Naive thymus-derived CD4-positive, alpha-beta T cell (primary cell): ENCODE measurements at regions of chr15 and their contacts with region 1.

Region 1: DNA sequence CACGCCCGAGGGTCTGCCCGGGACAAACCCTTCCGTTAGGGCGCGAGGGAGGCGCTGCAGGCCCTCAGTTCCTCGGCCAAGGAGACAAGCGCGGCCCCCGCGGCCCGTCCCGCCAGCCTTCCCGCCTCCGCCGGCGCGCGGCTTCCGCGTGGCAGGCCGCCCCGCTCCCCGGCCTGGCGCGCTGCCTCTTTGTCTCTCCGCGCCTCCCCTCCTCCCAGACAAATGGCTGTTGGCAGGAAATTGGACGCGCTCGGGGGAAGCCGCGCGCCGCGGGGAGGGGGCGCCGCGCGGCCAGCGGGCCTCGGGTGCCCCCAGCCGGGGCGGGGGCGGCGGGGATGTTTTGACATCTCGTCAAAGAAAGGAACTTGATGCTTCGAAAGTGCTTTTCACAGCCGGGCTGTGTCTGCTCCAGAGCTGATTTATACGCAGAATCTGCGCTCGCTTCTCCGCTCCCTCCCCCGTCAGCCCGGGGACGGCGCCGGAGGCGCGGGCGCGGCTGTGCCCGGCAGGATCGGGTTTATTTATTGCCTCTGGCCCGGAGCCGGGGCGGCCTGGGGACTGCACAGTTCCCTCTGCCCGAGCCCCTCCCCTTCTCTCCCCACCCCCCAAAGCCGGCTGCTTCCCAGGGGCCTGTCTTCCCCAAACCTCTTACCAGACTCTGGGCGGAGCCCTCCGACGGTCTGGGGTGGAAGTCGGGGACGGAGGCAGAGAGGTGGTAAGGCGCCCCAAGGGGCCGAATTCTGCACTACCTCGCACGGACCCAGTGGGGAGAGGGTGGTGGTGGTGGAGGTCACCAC is 20.7 kb downstream of the SHF start:
- DNase-seq: peak; percentile 58 to 82 (median 78)
- ATAC-seq: peak; percentile 95
- H3K4me3 ChIP-seq: peak overlapping the region; percentile 70
- H3K4me3 Mint-ChIP-seq: peak overlapping the region; percentile 62 to 86 (median 74)
- H3K27ac ChIP-seq: peak overlapping the region; percentile 95
- H3K27ac Mint-ChIP-seq: peak overlapping the region; percentile 62 to 92 (median 83)
- H3K4me1 ChIP-seq: peaks cover 10 to 13% of the 10 kb centered on the region in 2 donors
- H3K4me1 Mint-ChIP-seq: peaks cover 0 to 31% (median 18%) of the 10 kb centered on the region in 7 donors
- H3K27me3 ChIP-seq: no peaks in the 10 kb centered on the region
- H3K27me3 Mint-ChIP-seq: no peaks in the 10 kb centered on the region

Region 2: GRCh38 chr15:45126535-45127158 is 40.4 kb before region 1 on chr15:
- CTCF ChIA-PET with region 1: no interaction called
- POLR2A ChIA-PET with region 1: no interaction called
- intact Hi-C with region 1: loop called in 1 of 2 experiments (anchors 1 kb)
- DNase-seq: peak in 7 of 9 donors; percentile 17 to 51 (median 43)
- ATAC-seq: peak; percentile 72
- H3K4me3 ChIP-seq: no peak overlapping the region
- H3K4me3 Mint-ChIP-seq: no peak overlapping the region
- H3K27ac ChIP-seq: no peak overlapping the region
- H3K27ac Mint-ChIP-seq: no peak overlapping the region
- H3K4me1 ChIP-seq: no peaks in the 10 kb centered on the region
- H3K4me1 Mint-ChIP-seq: peaks cover 0 to 13% (median 6%) of the 10 kb centered on the region in 7 donors
- H3K27me3 ChIP-seq: peaks cover 0 to 8% of the 10 kb centered on the region in 2 donors
- H3K27me3 Mint-ChIP-seq: peaks cover 59 to 70% (median 61%) of the 10 kb centered on the region in 5 donors

Region 3: DNA sequence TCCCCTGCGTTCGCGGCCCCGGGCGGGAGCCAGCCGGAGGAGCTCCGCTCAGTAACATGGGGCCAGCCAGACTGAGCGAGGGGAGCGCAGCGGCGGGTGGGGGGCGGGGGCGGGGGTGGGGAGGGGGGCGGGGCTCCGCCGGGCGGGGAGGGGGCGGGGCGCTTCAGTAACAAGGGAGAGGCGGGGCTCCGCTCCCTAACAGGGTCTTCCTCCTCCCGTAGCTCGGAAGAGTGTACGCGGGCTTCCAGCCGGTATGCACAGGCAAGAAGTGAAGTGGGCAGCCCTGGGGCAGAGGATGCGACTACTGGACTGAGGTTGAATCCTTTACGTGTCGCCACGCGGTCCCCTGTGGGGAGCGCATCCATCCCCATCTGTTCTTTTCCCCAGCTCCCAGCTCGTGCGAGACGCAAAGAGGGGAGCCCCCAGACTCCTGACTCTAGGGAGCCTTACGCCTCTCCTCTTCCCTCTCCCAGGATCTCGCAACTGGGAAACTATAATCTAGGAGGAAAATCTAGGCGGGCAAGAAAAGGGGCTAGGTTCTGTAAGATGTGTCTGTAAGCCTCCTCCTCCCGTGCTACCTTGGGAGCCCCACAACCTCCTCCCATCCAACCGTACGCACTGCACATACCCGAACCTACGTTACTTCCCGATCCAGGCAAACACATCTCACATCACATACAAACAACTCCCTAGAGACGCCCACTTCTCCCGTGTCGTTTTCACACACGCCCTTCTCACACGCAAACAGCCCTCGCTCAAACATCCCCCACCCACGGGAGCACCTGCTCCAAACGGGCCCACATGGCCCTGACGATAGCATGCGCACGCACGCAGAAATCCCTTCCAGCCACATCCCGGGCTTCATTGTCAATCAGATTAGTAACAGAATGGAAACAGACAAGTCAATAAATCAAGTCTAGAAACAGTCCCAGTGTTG is 21.1 kb after region 1 on chr15 and contains the start of gene SHF:
- CTCF ChIA-PET with region 1: interaction called, 3 read pairs
- POLR2A ChIA-PET with region 1: interaction called, 16 read pairs
- intact Hi-C with region 1: loop called in 1 of 2 experiments (anchors 1 kb)
- DNase-seq: peak; percentile 38 to 83 (median 57)
- ATAC-seq: peak; percentile 81
- H3K4me3 ChIP-seq: peak within 1 kb of the TSS; percentile 76
- H3K4me3 Mint-ChIP-seq: peak within 1 kb of the TSS; percentile 84 to 97 (median 92)
- H3K27ac ChIP-seq: peak within 1 kb of the TSS; percentile 92
- H3K27ac Mint-ChIP-seq: peak within 1 kb of the TSS; percentile 77 to 95 (median 89)
- H3K4me1 ChIP-seq: peaks cover 3 to 5% of the 10 kb centered on the region in 2 donors
- H3K4me1 Mint-ChIP-seq: peaks cover 11 to 27% (median 20%) of the 10 kb centered on the region in 7 donors
- H3K27me3 ChIP-seq: no peaks in the 10 kb centered on the region
- H3K27me3 Mint-ChIP-seq: peaks cover 0 to 25% (median 2%) of the 10 kb centered on the region in 5 donors
- total RNA-seq, gene SHF: 3.5 to 8.7 (median 6.2) TPM

Region 4: GRCh38 chr15:45268135-45268534 is 101.1 kb after region 1 on chr15:
- CTCF ChIA-PET with region 1: interaction called, 3 read pairs
- POLR2A ChIA-PET with region 1: no interaction called
- intact Hi-C with region 1: loop called in 1 of 2 experiments (anchors 2 kb)
- DNase-seq: no peak
- ATAC-seq: no peak
- H3K4me3 ChIP-seq: no peak overlapping the region
- H3K4me3 Mint-ChIP-seq: no peak overlapping the region
- H3K27ac ChIP-seq: no peak overlapping the region
- H3K27ac Mint-ChIP-seq: no peak overlapping the region
- H3K4me1 ChIP-seq: no peaks in the 10 kb centered on the region
- H3K4me1 Mint-ChIP-seq: no peaks in the 10 kb centered on the region
- H3K27me3 ChIP-seq: no peaks in the 10 kb centered on the region
- H3K27me3 Mint-ChIP-seq: no peaks in the 10 kb centered on the region

Region 5: GRCh38 chr15:45587095-45587860 is 420.2 kb after region 1 on chr15 and contains the start of gene BLOC1S6:
- CTCF ChIA-PET with region 1: no interaction called
- POLR2A ChIA-PET with region 1: interaction called, 3 read pairs
- intact Hi-C with region 1: loop called (anchors 1 kb)
- DNase-seq: peak; percentile 81 to 91 (median 87)
- ATAC-seq: peak; percentile 87
- H3K4me3 ChIP-seq: peak within 1 kb of the TSS; percentile 87
- H3K4me3 Mint-ChIP-seq: peak within 1 kb of the TSS; percentile 96 to 100 (median 98)
- H3K27ac ChIP-seq: peak within 1 kb of the TSS; percentile 97
- H3K27ac Mint-ChIP-seq: peak within 1 kb of the TSS; percentile 100
- H3K4me1 ChIP-seq: peaks cover 25 to 26% of the 10 kb centered on the region in 2 donors
- H3K4me1 Mint-ChIP-seq: peaks cover 27 to 55% (median 38%) of the 10 kb centered on the region in 7 donors
- H3K27me3 ChIP-seq: no peaks in the 10 kb centered on the region
- H3K27me3 Mint-ChIP-seq: no peaks in the 10 kb centered on the region
- total RNA-seq, gene BLOC1S6: 34.4 to 63.9 (median 50.9) TPM